A549 (cell line): ENCODE measurements at regions of chr17 and their contacts with region 1.

Region 1: DNA sequence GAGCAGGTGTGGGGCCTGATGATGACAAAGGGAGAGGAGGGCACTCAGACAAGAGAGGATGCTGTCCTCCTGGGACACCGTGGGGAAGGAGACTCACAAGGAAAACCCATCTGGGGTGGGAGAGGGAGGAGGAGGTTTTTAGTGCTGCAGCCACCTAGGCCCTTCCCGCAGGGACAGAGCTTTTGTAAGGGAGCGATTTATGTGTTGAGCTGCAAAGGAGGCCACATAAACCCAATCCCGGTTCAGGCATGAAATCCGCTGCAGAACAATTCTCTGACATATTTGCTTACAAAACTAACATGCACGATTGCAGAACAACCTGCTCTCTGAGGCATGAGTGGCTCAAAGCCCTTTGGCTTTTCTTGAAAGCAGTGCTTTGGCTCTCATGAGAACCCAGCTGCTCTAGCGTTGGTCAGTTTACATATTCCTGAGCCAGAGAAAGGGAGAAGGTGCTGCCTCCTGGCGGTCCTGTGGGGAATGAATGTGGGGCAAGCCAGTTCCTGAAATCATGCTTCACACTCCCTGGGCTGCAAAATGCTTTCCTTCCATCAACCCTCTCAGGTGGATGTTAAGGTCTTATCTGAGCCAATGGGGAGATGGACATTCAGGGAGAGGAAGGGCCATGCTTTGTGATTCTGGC is 122.4 kb upstream of the NLRP1 start:
- DNase-seq: peak; percentile 67 to 69
- ATAC-seq: peak; percentile 69 to 90; a peak in 5 of 6 replicates
- H3K4me3 ChIP-seq: no peak overlapping the region
- H3K27ac ChIP-seq: no peak overlapping the region
- H3K4me1 ChIP-seq: no peaks in the 10 kb centered on the region
- CTCF ChIP-seq: peak; percentile 53
- EP300 ChIP-seq: no peak
- POLR2A ChIP-seq: no peak
- RAD21 ChIP-seq: peak; percentile 53 to 72

Region 2: GRCh38 chr17:5610956-5611355 is 95.7 kb before region 1 on chr17:
- CTCF ChIA-PET with region 1: no interaction called
- POLR2A ChIA-PET with region 1: no interaction called
- DNase-seq: no peak
- ATAC-seq: no peak
- H3K4me3 ChIP-seq: no peak overlapping the region
- H3K27ac ChIP-seq: no peak overlapping the region
- H3K4me1 ChIP-seq: no peaks in the 10 kb centered on the region
- CTCF ChIP-seq: no peak
- EP300 ChIP-seq: no peak
- POLR2A ChIP-seq: no peak
- RAD21 ChIP-seq: no peak

Region 3: DNA sequence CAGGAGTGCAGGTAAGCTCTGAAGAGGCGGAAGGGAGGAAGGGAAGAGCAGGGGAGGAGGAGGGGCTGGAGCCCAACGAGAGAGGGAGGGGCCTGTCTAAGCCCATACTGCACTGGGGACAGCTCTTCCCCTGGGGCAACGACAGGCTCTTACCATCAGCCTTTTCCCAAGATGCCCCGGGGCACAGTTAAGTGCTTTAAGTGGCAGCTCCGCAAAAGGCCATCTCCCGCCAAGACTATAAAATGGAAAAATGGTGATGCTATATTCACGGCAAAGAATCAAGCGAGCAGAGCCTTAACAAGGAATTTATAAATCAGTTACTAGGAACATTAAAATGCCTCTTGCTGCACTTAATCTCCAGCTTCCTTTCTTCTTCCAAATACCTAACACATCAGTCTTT is 12.1 kb before region 1 on chr17:
- CTCF ChIA-PET with region 1: interaction called, 17 read pairs
- POLR2A ChIA-PET with region 1: no interaction called
- DNase-seq: peak in 1 of 2 experiments; percentile 18
- ATAC-seq: no peak
- H3K4me3 ChIP-seq: no peak overlapping the region
- H3K27ac ChIP-seq: no peak overlapping the region
- H3K4me1 ChIP-seq: no peaks in the 10 kb centered on the region
- CTCF ChIP-seq: no peak
- EP300 ChIP-seq: no peak
- POLR2A ChIP-seq: no peak
- RAD21 ChIP-seq: no peak